Ovary (tissue), 10 donors: ENCODE measurements at regions of chr11 and their contacts with region 1.

Region 1: GRCh38 chr11:1832211-1832919 is 2.4 kb upstream of the SYT8 start:
- DNase-seq: peak; percentile 33 to 75 (median 62)
- H3K4me3 ChIP-seq: no peak overlapping the region
- H3K27ac ChIP-seq: no peak overlapping the region
- H3K4me1 ChIP-seq: no peaks in the 10 kb centered on the region
- H3K27me3 ChIP-seq: no peaks in the 10 kb centered on the region
- CTCF ChIP-seq: peak; percentile 82 to 96 (median 86)
- EP300 ChIP-seq: no peak
- POLR2A ChIP-seq: no peak

Region 2: GRCh38 chr11:1694064-1694845 is 138.1 kb before region 1 on chr11:
- intact Hi-C with region 1: loop called (anchors 1 to 2 kb)
- DNase-seq: peak; percentile 73 to 92 (median 89)
- H3K4me3 ChIP-seq: peak overlapping the region; percentile 6
- H3K27ac ChIP-seq: peak overlapping the region in 1 of 2 donors; percentile 16
- H3K4me1 ChIP-seq: peaks cover 8% of the 10 kb centered on the region
- H3K27me3 ChIP-seq: no peaks in the 10 kb centered on the region
- CTCF ChIP-seq: peak; percentile 82 to 91 (median 85)
- EP300 ChIP-seq: no peak
- POLR2A ChIP-seq: no peak

Region 3: GRCh38 chr11:1863352-1864216 is 31.2 kb after region 1 on chr11:
- intact Hi-C with region 1: no loop called
- DNase-seq: peak; percentile 82 to 91 (median 86)
- H3K4me3 ChIP-seq: peak overlapping the region; percentile 24
- H3K27ac ChIP-seq: peak overlapping the region; percentile 61 to 86
- H3K4me1 ChIP-seq: peaks cover 21% of the 10 kb centered on the region
- H3K27me3 ChIP-seq: no peaks in the 10 kb centered on the region
- CTCF ChIP-seq: no peak
- EP300 ChIP-seq: no peak
- POLR2A ChIP-seq: no peak